GM10248 (cell line): ENCODE measurements at regions of chr16 and their contacts with region 1.

Region 1: GRCh38 chr16:11056090-11056992 is 112.0 kb downstream of the CLEC16A start:
- DNase-seq: no peak
- CTCF ChIP-seq: no peak

Region 2: GRCh38 chr16:11066231-11066870 is 10.0 kb after region 1 on chr16:
- CTCF ChIA-PET with region 1: interaction called, 13 read pairs
- POLR2A ChIA-PET with region 1: no interaction called
- DNase-seq: no peak
- CTCF ChIP-seq: no peak